ENCODE measurements at regions of chr2 and their contacts with region 1.

Region 1: DNA sequence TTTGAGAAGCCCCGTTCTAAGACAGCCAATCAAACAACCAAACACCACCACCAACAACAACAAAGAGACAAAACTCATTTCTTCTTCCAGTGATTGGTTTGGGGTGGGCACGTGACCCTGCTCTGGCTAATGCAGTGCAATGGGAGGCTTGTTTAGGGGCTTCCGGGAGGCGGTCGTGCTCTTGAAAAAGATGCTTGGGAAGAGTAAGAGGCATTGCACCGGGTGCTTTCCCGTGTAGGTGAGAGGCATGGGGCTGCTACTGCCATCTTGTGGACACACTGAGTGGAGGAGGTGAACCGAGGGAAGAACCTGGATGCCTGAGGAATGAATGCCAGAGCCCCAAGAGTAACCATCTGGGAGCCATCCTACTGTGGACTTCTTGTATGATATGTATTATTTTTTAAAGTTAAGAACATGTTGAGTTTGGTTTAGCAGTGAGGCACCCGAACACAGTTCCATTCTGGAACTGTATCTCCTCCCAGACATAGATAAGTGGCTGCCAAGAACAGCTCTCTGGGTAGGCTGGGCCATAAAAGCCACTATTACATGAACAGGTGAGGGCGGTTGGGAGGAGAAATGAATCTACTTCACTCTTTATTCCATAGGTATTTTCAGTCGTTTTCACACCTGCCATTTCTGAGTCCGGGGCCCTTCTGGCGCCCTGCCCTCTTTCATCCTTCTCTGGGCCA is 19.1 kb upstream of the ARHGAP25 start:
- DNase-seq: no peak
- ATAC-seq: peak; percentile 51
- H3K4me3 Mint-ChIP-seq: peak overlapping the region; percentile 21
- H3K27ac Mint-ChIP-seq: peak overlapping the region; percentile 89
- H3K4me1 Mint-ChIP-seq: peaks cover 82% of the 10 kb centered on the region
- H3K27me3 Mint-ChIP-seq: no peaks in the 10 kb centered on the region
- CTCF ChIP-seq: no peak

Region 2: DNA sequence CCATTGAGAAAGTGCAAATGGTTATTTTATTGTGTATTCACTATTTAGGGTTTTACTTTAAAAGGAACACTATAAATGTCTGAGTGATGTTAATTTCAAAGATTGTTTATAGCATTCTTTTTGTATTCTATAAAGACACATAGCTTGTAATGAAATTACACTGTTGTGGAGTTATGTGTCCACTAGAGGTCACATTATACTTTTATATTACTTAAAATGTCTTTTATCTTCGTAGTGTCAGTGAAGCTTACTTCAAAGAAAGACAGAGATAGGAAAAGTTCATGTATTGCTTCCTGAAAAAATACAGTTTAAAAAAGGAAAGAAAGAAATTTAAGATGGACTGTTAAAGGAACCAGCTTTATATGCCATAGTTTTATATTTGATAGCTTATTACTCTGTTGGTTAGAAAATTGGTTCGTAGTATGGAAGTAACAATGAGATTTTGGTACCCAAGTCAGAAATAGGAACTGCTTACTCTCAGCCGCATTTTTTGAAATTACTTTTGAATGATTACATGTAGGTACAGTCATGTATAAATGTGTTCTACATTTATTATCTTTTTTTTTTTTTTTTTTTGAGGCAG is 227.6 kb before region 1 on chr2:
- CTCF ChIA-PET with region 1: interaction called, 5 read pairs
- POLR2A ChIA-PET with region 1: no interaction called
- intact Hi-C with region 1: loop called (anchors 2 kb)
- DNase-seq: no peak
- ATAC-seq: peak; percentile 54
- H3K4me3 Mint-ChIP-seq: no peak overlapping the region
- H3K27ac Mint-ChIP-seq: no peak overlapping the region
- H3K4me1 Mint-ChIP-seq: peaks cover 5% of the 10 kb centered on the region
- H3K27me3 Mint-ChIP-seq: no peaks in the 10 kb centered on the region
- CTCF ChIP-seq: peak; percentile 39

Region 3: GRCh38 chr2:68726608-68727367 is 11.3 kb after region 1 on chr2:
- CTCF ChIA-PET with region 1: interaction called, 22 read pairs
- POLR2A ChIA-PET with region 1: interaction called, 18 read pairs
- intact Hi-C with region 1: loop called (anchors 1 kb)
- DNase-seq: peak; percentile 52
- ATAC-seq: peak; percentile 95
- H3K4me3 Mint-ChIP-seq: peak overlapping the region; percentile 29
- H3K27ac Mint-ChIP-seq: peak overlapping the region; percentile 78
- H3K4me1 Mint-ChIP-seq: peaks cover 49% of the 10 kb centered on the region
- H3K27me3 Mint-ChIP-seq: no peaks in the 10 kb centered on the region
- CTCF ChIP-seq: no peak

Region 4: GRCh38 chr2:68742626-68743415 is 27.3 kb after region 1 on chr2:
- CTCF ChIA-PET with region 1: interaction called, 57 read pairs
- POLR2A ChIA-PET with region 1: interaction called, 74 read pairs
- intact Hi-C with region 1: no loop called
- DNase-seq: no peak
- ATAC-seq: peak; percentile 49
- H3K4me3 Mint-ChIP-seq: peak overlapping the region; percentile 55
- H3K27ac Mint-ChIP-seq: peak overlapping the region; percentile 87
- H3K4me1 Mint-ChIP-seq: peaks cover 91% of the 10 kb centered on the region
- H3K27me3 Mint-ChIP-seq: no peaks in the 10 kb centered on the region
- CTCF ChIP-seq: no peak

Region 5: DNA sequence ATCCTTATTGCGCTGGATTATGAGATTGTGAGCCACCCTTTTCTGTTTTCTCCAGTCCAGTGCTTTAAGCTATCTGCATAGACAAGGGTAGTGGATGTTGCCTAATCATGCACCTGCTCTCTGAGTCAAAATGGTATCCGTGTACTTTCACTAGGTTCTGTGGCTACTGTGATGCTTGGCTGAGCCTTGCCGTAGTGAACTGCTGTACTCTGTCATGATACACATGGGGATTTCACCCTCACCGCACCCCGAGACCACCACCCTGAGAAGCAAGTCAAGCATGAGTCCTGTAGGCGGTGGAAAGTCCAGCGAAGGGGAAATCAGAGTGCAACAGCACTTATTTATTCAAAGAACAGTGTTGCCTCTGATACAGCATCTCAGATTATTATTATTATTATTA is 74.1 kb after region 1 on chr2:
- CTCF ChIA-PET with region 1: interaction called, 5 read pairs
- POLR2A ChIA-PET with region 1: interaction called, 9 read pairs
- intact Hi-C with region 1: loop called (anchors 2 kb)
- DNase-seq: peak; percentile 75
- ATAC-seq: peak; percentile 87
- H3K4me3 Mint-ChIP-seq: peak overlapping the region; percentile 61
- H3K27ac Mint-ChIP-seq: no peak overlapping the region
- H3K4me1 Mint-ChIP-seq: peaks cover 47% of the 10 kb centered on the region
- H3K27me3 Mint-ChIP-seq: no peaks in the 10 kb centered on the region
- CTCF ChIP-seq: no peak

Region 6: DNA sequence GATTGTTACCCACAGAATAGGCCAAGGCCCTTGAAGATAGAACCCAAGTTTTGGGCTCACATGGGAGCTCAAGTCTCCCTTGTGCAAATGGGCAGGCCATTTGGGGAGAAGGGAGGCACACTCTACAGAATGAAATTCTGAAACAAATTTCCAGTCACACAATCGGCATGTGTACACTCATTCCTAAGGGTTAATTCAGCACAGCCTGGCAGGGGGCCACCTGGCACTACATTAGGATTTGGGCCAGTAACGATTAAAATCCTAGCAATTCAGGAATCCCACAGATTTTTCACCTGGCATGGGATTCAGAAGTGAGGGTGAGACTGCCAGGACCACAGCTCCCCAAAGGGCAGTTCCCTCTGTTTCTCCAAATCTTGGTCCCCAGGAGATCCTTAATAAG is 109.3 kb after region 1 on chr2:
- CTCF ChIA-PET with region 1: no interaction called
- POLR2A ChIA-PET with region 1: no interaction called
- intact Hi-C with region 1: no loop called
- DNase-seq: no peak
- ATAC-seq: no peak
- H3K4me3 Mint-ChIP-seq: no peak overlapping the region
- H3K27ac Mint-ChIP-seq: peak overlapping the region; percentile 68
- H3K4me1 Mint-ChIP-seq: peaks cover 48% of the 10 kb centered on the region
- H3K27me3 Mint-ChIP-seq: no peaks in the 10 kb centered on the region
- CTCF ChIP-seq: no peak